Prostate gland (tissue), 2 donors: ENCODE measurements at regions of chr4 and their contacts with region 1.

Region 1: GRCh38 chr4:107930821-107931774 is at the start of gene CYP2U1:
- DNase-seq: peak; percentile 86
- H3K4me3 ChIP-seq: peak within 1 kb of the TSS; percentile 71 to 79
- H3K27ac ChIP-seq: peak within 1 kb of the TSS; percentile 70 to 74
- H3K4me1 ChIP-seq: no peaks in the 10 kb centered on the region
- H3K27me3 ChIP-seq: no peaks in the 10 kb centered on the region
- CTCF ChIP-seq: peak in 2 of 4 experiments; percentile 32 to 44
- POLR2A ChIP-seq: peak; percentile 63
- total RNA-seq, gene CYP2U1: 8.0 to 13.5 TPM

Region 2: GRCh38 chr4:107989537-107990386 is 58.7 kb after region 1 on chr4 and contains the start of gene HADH:
- intact Hi-C with region 1: loop called (anchors 5 kb)
- DNase-seq: peak; percentile 95
- H3K4me3 ChIP-seq: peak within 1 kb of the TSS; percentile 73 to 89
- H3K27ac ChIP-seq: peak within 1 kb of the TSS; percentile 86 to 90
- H3K4me1 ChIP-seq: no peaks in the 10 kb centered on the region
- H3K27me3 ChIP-seq: no peaks in the 10 kb centered on the region
- CTCF ChIP-seq: peak in 1 of 4 experiments; percentile 22
- POLR2A ChIP-seq: peak; percentile 92
- total RNA-seq, gene HADH: 69.0 to 75.2 TPM

Region 3: GRCh38 chr4:108204518-108204917 is 273.4 kb after region 1 on chr4:
- intact Hi-C with region 1: no loop called
- DNase-seq: no peak
- H3K4me3 ChIP-seq: no peak overlapping the region
- H3K27ac ChIP-seq: no peak overlapping the region
- H3K4me1 ChIP-seq: no peaks in the 10 kb centered on the region
- H3K27me3 ChIP-seq: no peaks in the 10 kb centered on the region
- CTCF ChIP-seq: no peak
- POLR2A ChIP-seq: no peak